ENCODE measurements at regions of chr17 and their contacts with region 1.

Region 1: DNA sequence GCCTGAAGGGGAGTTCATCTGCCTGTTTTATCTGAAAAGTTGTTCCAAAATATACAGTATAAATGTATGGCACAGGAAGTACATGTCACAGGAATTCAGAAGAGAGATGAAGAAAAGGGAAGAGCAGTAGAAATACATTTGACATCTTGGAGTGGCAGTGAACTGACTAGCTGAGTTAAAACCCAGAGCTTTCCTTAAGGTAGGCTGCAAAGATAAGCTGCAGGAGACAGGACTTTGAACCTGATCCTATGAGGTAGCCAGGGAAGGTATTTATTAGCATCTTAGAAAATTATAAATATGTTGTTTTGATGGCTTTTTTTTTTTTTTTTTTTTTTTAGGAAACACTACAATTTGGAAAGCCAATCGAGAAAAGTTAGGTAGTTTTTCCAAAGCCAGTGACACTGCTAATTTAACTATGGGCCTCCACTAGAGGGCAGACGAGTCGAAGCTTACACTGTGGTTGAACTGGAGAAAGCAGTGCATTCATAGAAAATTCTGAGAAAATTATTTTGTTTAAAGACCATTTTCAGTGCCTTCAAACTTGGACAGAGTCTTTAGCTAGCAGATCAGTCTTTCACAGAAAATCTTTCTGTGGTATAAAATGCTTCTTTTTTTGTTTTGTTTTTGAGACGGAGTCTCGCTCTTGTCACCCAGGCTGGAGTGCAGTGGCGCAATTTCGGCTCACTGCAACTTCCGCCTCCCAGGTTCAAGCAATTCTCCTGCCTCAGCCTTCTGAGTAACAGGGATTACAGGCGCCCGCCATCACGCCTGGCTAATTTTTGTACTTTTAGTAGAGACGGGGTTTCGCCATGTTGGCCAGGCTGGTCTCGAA is 122.3 kb downstream of the SSH2 start:
- DNase-seq: peak; percentile 42
- H3K4me3 ChIP-seq: no peak overlapping the region
- H3K27ac ChIP-seq: peak overlapping the region; percentile 54
- H3K27me3 ChIP-seq: no peaks in the 10 kb centered on the region
- CTCF ChIP-seq: peak; percentile 74

Region 2: GRCh38 chr17:29611311-29612053 is 196.3 kb before region 1 on chr17:
- CTCF ChIA-PET with region 1: no interaction called
- POLR2A ChIA-PET with region 1: no interaction called
- DNase-seq: no peak
- H3K4me3 ChIP-seq: no peak overlapping the region
- H3K27ac ChIP-seq: no peak overlapping the region
- H3K27me3 ChIP-seq: no peaks in the 10 kb centered on the region
- CTCF ChIP-seq: no peak

Region 3: GRCh38 chr17:29640413-29640812 is 167.3 kb before region 1 on chr17:
- CTCF ChIA-PET with region 1: interaction called, 14 read pairs
- POLR2A ChIA-PET with region 1: interaction called, 3 read pairs
- DNase-seq: peak; percentile 27
- H3K4me3 ChIP-seq: no peak overlapping the region
- H3K27ac ChIP-seq: peak overlapping the region; percentile 68
- H3K27me3 ChIP-seq: no peaks in the 10 kb centered on the region
- CTCF ChIP-seq: no peak

Region 4: GRCh38 chr17:29707212-29707571 is 100.5 kb before region 1 on chr17:
- CTCF ChIA-PET with region 1: interaction called, 12 read pairs
- POLR2A ChIA-PET with region 1: no interaction called
- DNase-seq: no peak
- H3K4me3 ChIP-seq: no peak overlapping the region
- H3K27ac ChIP-seq: no peak overlapping the region
- H3K27me3 ChIP-seq: no peaks in the 10 kb centered on the region
- CTCF ChIP-seq: no peak

Region 5: DNA sequence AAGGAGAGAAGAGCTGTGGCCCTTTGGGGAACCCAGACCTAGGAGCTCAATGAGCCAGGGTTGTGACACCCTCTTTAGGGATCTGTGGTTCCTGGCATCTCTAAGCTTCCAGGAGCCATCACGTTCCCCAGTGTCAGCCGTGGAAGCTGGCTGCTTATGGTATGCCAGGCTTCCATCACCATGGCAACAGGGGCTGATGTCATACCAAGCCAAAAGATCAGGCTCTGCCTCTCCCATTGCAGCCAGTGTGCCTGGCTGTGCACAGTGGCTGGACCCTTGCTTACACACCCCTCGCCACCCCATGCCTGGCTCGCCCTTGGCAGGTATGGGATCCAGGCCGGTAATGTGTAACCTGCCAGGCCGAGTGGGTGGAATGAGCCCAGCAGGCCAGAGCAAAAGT is 31.2 kb after region 1 on chr17:
- CTCF ChIA-PET with region 1: interaction called, 10 read pairs
- POLR2A ChIA-PET with region 1: no interaction called
- DNase-seq: no peak
- H3K4me3 ChIP-seq: no peak overlapping the region
- H3K27ac ChIP-seq: no peak overlapping the region
- H3K27me3 ChIP-seq: no peaks in the 10 kb centered on the region
- CTCF ChIP-seq: no peak

Region 6: DNA sequence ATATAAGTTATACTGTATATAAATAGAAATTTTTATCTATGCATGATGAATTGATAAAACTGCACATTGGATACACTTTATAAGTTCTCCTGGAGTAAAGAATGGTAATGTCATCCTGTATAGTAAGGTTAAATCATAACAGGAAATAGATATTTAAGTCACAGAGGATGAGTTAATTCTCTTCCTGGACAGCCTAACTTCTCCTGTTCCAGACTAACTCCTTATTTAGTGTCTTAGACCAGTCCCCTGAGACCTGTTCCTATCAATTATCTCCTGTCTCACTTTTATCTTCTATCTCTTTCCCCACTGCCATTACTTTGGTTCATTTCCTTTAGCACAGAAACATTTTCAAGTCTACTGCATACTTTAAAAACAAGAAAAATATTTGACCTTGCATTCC is 75.8 kb after region 1 on chr17:
- CTCF ChIA-PET with region 1: interaction called, 11 read pairs
- POLR2A ChIA-PET with region 1: no interaction called
- DNase-seq: no peak
- H3K4me3 ChIP-seq: no peak overlapping the region
- H3K27ac ChIP-seq: no peak overlapping the region
- H3K27me3 ChIP-seq: no peaks in the 10 kb centered on the region
- CTCF ChIP-seq: no peak

Region 7: DNA sequence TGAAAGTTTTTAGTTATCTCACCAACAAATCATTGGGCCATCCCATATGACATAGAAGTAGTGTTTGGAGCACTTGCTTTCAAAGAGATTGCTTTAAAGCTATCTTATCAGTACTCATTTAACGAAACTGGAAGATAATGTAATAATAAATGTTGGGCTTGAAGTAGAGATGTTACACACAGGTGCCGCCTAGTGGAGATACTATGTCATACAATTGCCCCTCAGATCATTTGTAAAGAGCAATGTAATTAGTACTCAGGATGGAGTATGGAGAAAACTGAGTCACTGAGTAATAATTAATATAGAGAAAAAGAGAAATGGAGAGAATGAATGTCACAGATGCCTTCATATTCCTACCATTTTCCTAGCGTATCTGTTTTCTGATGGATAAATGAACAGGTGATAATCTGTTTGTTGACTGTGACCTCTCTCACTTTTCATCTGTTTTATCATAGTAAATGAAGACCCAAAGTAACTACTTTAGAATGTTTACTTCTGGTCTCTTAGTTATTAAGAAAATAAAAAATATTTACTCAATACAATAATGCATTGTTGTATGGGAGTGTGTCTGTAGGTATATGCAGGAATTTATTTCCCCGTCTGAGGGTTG is 214.1 kb after region 1 on chr17:
- CTCF ChIA-PET with region 1: interaction called, 31 read pairs
- POLR2A ChIA-PET with region 1: no interaction called
- DNase-seq: peak; percentile 13
- H3K4me3 ChIP-seq: no peak overlapping the region
- H3K27ac ChIP-seq: no peak overlapping the region
- H3K27me3 ChIP-seq: no peaks in the 10 kb centered on the region
- CTCF ChIP-seq: peak; percentile 87

Measured in AG04450 (cell line).